Activated T-helper 1 cell treated with anti-CD3 and anti-CD28 coated beads, Interleukin-12 subunit alpha, Interleukin-12 subunit beta, Interleukin-2, Interleukin-4 antibody, amounts not matched to agents 30 ng/mL and 10 ng/mL and 1 ng/mL, durations not matched to agents 14 hours and 24 hours and 36 hours (primary cell): ENCODE measurements at regions of chr12 and their contacts with region 1.

Region 1: GRCh38 chr12:111812881-111813741 is 28.9 kb upstream of the MAPKAPK5 start:
- DNase-seq: peak; percentile 47
- H3K4me3 Mint-ChIP-seq: no peak overlapping the region
- H3K27ac Mint-ChIP-seq: no peak overlapping the region
- H3K4me1 Mint-ChIP-seq: peaks cover 6% of the 10 kb centered on the region
- H3K27me3 Mint-ChIP-seq: peaks cover 2% of the 10 kb centered on the region

Region 2: GRCh38 chr12:111753144-111753881 is 59.8 kb before region 1 on chr12:
- intact Hi-C with region 1: loop called (anchors 1 kb)
- DNase-seq: no peak
- H3K4me3 Mint-ChIP-seq: no peak overlapping the region
- H3K27ac Mint-ChIP-seq: no peak overlapping the region
- H3K4me1 Mint-ChIP-seq: peaks cover 8% of the 10 kb centered on the region
- H3K27me3 Mint-ChIP-seq: no peaks in the 10 kb centered on the region

Region 3: GRCh38 chr12:111766608-111767361 is 46.3 kb before region 1 on chr12 and contains the start of gene ALDH2:
- intact Hi-C with region 1: no loop called
- DNase-seq: no peak
- H3K4me3 Mint-ChIP-seq: peak within 1 kb of the TSS; percentile 70
- H3K27ac Mint-ChIP-seq: no peak within 1 kb of the TSS
- H3K4me1 Mint-ChIP-seq: peaks cover 19% of the 10 kb centered on the region
- H3K27me3 Mint-ChIP-seq: peaks cover 30% of the 10 kb centered on the region
- total RNA-seq, gene ALDH2: 0.15 and 0.44 TPM in 2 replicates

Region 4: DNA sequence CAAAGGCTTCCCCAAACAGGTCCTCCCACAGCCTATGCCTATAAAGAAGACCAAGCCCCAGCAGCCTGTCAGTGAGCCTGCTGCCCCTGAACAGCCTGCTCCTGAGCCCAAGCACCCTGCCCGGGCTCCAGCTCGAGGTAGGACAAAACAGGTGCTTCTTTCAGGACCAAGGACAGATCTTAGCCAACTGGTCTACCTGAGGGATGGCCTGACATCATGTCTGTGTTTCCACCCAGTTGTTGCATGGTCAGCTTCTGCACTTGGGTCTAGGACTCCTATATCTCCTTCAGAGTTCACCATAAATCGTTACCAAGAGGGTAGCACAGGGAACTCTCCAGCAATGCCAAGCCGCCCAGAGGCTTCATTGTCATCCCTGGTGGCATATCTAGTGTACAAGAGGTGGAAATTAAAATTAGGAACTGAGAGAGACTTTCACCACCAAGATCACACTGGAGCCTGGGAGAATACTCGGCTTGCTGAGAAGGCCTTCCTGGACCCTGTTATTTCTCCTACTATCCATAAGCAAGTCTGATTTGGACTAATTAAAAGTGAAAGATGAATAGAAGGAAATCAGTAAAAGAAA is 1055.4 kb after region 1 on chr12:
- intact Hi-C with region 1: no loop called
- DNase-seq: no peak
- H3K4me3 Mint-ChIP-seq: no peak overlapping the region
- H3K27ac Mint-ChIP-seq: no peak overlapping the region
- H3K4me1 Mint-ChIP-seq: no peaks in the 10 kb centered on the region
- H3K27me3 Mint-ChIP-seq: peaks cover 36% of the 10 kb centered on the region